ENCODE measurements at regions of chr5 and their contacts with region 1.

Region 1: DNA sequence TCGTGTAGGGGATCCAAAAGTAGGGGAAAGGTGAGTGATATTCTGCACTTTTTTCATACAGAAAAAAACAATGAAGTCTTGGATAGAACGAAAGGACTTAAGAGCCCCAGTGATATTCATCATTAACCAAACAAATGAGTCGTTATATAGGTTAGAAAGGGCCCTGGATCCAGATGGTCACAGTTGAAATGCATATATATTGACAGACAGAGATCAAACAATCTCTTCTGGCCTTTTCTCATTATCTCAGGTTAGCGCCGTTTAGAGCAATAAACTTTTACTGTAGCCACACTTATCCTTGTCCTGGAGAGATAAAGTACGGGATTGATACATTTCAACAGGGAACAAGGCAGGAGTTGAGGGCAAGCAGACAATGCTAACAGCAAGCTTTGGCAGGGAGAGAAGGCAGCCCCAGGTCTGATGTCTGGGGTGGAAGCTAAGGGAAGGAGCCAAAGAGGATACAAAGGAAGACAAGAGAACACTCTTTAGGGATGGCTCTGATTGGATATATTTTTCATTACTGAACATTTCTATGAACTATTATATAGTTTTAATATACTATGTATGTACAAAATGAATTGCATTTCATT is 77.0 kb downstream of the LIFR start:
- DNase-seq: no peak
- ATAC-seq: no peak

Region 2: DNA sequence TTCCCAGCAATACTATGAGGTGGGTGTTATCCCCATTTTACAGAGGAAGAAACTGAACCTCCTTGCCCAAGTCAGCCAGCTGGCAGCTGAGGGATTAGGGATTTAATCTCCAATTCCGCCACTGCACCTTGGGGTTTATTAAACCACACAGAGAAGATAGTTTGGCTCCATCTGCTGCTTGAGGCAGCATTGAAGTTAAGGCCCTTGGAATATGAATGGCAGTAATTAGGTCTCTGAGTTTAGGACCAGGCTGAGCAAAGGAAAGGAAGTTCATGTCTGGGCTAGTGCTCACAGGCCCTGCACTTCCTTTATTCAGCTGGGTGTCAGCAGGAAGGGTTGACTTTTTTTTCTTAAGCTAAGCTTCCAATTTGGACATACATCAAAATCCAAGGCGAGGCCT is 552.7 kb before region 1 on chr5:
- intact Hi-C with region 1: no loop called
- DNase-seq: no peak
- ATAC-seq: no peak

Region 3: DNA sequence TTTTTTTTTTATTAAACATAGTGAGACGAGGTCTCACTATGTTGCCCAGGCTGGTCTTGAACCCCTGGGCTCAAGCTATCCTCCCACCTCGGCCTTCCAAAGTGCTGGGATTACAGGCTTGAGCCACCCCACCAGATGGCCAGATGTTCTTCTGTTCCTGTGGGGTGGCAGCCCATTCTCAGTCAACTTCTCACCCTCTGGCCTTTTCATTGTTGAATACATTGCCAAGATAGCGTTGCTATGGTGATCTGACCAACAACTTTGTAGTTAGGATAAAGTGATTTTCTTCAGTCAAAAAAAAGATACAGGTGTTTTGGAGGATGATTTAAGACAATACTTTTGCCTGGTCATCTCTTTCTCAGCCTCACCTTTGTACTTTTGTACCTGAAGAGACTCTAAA is 112.0 kb before region 1 on chr5:
- intact Hi-C with region 1: no loop called
- DNase-seq: no peak
- ATAC-seq: no peak

Region 4: DNA sequence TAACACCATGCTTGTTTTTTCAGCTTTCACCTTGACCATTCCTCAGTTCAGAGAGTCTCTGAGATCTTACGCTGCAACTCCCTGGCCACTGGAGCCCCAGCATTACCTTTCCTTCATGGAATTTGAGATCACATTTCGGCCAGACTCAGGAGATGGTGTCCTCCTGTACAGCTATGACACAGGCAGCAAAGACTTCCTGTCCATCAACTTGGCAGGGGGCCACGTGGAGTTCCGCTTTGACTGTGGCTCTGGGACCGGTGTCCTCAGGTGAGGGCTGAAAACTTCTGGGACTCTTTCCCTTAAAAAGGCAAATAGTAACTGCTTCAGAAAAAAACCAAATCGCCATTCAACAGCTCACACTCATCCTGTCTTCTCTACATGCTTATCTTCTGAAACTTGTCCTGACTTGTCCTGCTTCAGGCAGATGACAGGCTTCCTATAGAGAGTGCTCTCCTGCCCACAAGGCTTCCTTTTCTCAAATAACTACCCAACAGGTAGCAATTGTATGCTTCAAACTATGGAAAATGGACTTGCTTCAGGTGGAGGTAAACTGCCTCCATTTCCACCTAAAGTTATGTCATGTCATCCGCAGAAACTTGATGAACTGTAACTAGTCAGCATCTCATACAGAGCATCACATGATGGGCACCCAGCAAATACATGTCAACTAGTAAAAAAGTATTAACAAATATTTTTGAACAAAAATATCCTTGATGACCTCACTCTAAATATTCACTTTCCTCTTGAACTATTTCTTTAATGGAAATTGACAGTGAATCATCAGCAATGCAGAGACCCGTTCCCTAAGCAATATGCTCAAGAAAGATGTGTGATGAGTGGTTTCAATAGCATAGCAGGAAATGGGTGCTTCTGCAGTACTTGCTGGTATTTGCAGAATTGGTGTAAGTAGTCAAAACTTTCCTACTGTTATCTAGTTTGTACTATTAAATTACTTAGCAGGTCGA is 52.1 kb before region 1 on chr5:
- intact Hi-C with region 1: no loop called
- DNase-seq: no peak
- ATAC-seq: no peak

Region 5: GRCh38 chr5:38524022-38524421 is 44.6 kb after region 1 on chr5:
- intact Hi-C with region 1: loop called in 1 of 2 experiments (anchors 5 kb)
- DNase-seq: no peak
- ATAC-seq: no peak

Region 6: DNA sequence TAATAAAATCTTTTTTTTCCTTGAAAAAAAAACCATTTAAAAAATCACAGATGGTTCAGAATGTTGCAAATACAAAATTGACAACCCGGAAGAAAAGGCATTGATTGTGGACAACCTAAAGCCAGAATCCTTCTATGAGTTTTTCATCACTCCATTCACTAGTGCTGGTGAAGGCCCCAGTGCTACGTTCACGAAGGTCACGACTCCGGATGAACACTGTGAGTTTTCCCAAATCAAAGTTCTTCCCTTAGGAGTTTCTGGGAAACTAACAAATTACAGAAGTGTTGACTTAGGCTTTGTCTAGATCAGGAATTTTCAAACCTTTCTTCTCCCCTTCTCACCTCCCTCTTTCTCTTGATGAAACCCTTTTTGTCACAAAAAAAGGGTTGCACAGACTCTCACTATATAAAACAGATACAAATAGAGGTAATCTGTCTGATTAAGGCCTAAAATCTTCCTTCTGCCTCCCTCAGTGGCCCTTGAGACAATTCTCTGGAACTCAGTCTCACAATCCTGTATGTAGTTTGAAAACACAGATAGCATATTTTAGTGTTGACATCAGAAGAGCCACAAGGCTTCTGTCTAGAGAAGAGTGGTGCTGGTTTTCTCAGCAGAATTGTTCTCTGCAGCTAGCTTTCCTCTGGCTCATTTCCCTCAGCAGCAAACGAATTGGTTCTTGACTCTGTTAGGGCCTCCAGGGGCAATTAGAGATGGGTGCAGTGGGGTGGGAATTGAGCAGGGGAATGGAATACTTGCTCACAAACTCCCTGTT is 445.9 kb after region 1 on chr5:
- intact Hi-C with region 1: no loop called
- DNase-seq: no peak
- ATAC-seq: peak in 1 of 2 donors; percentile 38